ENCODE measurements at regions of chr2 and their contacts with region 1.

Region 1: DNA sequence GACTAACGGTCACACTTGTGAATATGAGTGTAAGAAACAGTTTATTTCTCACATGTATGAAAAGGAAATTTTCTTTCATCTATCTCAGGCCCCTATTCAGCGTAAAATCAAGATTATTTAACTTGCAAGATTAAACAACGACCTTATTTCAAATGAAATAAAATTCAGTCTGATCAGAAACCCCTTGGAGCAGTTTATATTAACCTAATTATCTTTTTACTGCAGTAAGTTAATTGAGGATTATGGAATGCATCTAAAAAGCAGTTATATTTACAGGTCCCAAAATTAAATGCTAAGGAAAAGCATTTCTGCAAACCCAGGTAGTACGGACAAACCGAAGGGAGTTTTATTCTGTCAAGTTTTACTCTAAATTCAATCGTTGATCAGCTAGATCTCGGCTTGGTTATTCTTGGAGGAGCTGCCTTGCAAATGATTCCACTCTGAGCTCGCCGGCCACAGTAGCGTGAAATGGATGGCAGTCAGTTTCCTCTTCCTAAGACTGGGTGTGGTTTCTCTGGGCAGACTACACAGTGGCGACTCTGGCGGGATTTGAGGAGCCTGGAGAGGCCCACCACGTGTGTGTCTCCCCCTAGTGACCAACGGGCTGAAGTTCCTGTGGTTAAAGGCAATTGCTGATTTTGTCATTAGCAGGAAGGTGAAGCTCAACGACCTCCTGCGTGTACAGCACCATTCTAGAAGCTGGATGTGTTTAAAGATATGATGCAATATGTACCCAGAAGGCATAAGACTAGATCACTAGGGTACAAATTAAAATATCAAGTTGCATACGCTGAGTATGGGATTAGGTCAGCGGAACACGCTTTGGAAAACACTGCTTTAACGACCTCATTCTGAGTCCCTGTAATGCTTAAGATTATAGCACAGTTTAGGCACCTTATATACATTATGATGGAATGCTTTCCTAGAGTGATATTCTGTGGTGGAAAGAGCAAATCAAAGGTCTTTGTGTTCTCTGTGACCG is 36.4 kb downstream of the PRKRA start:
- DNase-seq: peak; percentile 94
- H3K4me3 ChIP-seq: peak overlapping the region; percentile 49 to 91 (median 69)
- H3K27ac ChIP-seq: peak overlapping the region; percentile 91
- H3K4me1 ChIP-seq: peaks cover 13% of the 10 kb centered on the region
- H3K27me3 ChIP-seq: no peaks in the 10 kb centered on the region
- CTCF ChIP-seq: peak; percentile 90 to 94
- POLR2A ChIP-seq: peak; percentile 86

Region 2: DNA sequence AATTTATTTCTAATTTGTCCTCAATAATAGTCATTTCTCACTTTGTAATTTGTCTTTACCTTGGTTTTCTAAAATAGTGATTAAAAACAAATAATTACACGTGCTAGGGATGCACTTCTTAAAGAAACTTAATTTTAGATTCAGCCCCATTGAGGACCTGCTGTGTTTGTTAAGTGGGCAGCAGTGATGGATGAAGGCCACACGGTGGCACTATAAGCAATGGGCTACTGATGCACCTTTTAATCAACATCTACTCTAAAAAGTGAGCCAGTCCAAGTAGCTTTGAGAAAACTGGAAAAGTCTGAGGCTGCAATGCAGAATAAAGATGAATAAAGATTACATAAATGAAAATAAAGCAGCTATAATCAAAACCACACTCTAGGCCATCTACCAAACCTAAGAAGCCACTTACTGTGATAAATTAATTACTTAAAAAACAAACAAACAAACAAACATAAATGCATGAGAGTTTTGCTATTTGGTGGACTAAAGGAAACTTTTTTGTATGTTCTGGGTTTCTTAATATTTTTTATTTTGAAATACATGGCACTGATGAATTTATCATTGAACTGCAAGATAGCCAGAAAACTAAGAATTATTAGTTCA is 431.3 kb before region 1 on chr2:
- CTCF ChIA-PET with region 1: interaction called, 17 read pairs
- POLR2A ChIA-PET with region 1: no interaction called
- dilution Hi-C with region 1: no loop called
- intact Hi-C with region 1: loop called (anchors 5 kb)
- DNase-seq: peak; percentile 53
- H3K4me3 ChIP-seq: no peak overlapping the region
- H3K27ac ChIP-seq: no peak overlapping the region
- H3K4me1 ChIP-seq: no peaks in the 10 kb centered on the region
- H3K27me3 ChIP-seq: peaks cover 2 to 3% of the 10 kb centered on the region in 2 experiments
- CTCF ChIP-seq: peak; percentile 72 to 84
- POLR2A ChIP-seq: no peak

Region 3: DNA sequence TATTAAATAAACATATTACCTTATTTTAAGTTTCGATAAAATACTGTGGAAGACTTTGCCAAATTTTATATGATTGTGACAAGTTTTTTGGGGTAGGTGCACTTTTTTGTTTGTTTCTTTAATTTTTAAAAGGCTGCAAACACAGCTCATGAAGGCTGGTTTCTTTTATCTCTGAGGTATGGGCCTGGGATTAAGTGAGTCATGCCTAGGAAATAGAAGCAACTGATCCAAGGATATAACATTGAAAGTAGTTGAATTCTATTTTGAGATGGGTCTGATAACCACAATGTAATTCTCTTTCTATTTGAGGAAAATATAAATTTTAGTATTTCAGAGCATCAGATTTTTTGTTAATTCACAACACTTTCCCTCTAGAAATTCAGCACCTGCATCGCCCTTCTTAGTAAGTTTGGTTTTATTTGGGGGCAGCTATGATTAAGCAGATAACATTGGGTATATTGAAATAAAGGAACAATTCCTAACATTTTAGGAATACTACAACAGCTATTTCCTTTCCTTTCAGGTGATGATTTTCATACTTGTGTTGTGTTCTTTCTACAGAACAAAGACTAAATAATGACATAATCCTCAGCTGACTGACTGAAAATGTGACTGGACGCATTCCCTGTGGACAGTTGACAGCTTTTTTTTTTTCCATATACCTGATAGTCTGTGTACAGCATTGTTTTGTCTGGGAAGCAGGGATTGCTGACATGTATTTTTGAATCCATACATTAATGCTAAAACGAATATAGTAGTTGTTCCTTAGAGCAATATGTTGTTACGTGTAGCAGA is 285.5 kb before region 1 on chr2:
- CTCF ChIA-PET with region 1: interaction called, 122 read pairs
- POLR2A ChIA-PET with region 1: no interaction called
- dilution Hi-C with region 1: no loop called
- intact Hi-C with region 1: loop called (anchors 1 kb)
- DNase-seq: no peak
- H3K4me3 ChIP-seq: no peak overlapping the region
- H3K27ac ChIP-seq: no peak overlapping the region
- H3K4me1 ChIP-seq: no peaks in the 10 kb centered on the region
- H3K27me3 ChIP-seq: no peaks in the 10 kb centered on the region
- CTCF ChIP-seq: no peak
- POLR2A ChIP-seq: no peak

Region 4: DNA sequence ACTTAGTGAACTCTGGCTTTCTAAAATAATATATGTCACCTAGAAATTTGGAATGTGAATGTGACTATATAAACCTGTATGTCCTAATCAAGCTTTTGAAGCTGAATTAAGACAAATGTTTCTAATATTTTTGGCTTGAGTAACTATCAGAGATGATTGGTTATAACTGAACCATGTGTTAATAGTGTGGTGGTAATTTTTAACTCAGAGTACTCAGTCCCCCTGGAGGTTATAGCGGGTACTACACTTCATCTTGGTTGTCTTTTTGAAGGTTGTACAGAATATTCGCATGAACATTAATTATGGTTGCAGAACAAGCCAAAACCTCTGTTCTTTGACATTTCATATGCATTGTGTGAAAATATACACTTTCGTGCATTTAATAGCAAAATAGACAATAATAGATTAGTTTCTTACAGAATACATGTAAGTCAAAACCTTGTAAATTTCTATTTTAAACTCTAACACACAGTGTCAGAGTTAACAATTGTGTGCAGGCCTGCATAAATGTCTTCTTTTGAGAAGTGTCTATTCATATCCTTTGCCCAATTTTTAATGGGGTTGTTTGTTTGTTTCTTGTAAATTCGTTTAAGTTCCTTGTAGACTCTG is 134.2 kb before region 1 on chr2:
- CTCF ChIA-PET with region 1: interaction called, 10 read pairs
- POLR2A ChIA-PET with region 1: no interaction called
- dilution Hi-C with region 1: no loop called
- intact Hi-C with region 1: no loop called
- DNase-seq: peak; percentile 71
- H3K4me3 ChIP-seq: no peak overlapping the region
- H3K27ac ChIP-seq: no peak overlapping the region
- H3K4me1 ChIP-seq: peaks cover 22% of the 10 kb centered on the region
- H3K27me3 ChIP-seq: peaks cover 0 to 4% of the 10 kb centered on the region in 2 experiments
- CTCF ChIP-seq: peak; percentile 48 to 49
- POLR2A ChIP-seq: no peak

Region 5: GRCh38 chr2:178397002-178397605 is 17.5 kb before region 1 on chr2:
- CTCF ChIA-PET with region 1: interaction called, 74 read pairs
- POLR2A ChIA-PET with region 1: interaction called, 4 read pairs
- dilution Hi-C with region 1: no loop called
- intact Hi-C with region 1: loop called (anchors 1 kb)
- DNase-seq: peak; percentile 59
- H3K4me3 ChIP-seq: no peak overlapping the region
- H3K27ac ChIP-seq: no peak overlapping the region
- H3K4me1 ChIP-seq: no peaks in the 10 kb centered on the region
- H3K27me3 ChIP-seq: no peaks in the 10 kb centered on the region
- CTCF ChIP-seq: peak; percentile 43 to 51
- POLR2A ChIP-seq: no peak

Region 6: DNA sequence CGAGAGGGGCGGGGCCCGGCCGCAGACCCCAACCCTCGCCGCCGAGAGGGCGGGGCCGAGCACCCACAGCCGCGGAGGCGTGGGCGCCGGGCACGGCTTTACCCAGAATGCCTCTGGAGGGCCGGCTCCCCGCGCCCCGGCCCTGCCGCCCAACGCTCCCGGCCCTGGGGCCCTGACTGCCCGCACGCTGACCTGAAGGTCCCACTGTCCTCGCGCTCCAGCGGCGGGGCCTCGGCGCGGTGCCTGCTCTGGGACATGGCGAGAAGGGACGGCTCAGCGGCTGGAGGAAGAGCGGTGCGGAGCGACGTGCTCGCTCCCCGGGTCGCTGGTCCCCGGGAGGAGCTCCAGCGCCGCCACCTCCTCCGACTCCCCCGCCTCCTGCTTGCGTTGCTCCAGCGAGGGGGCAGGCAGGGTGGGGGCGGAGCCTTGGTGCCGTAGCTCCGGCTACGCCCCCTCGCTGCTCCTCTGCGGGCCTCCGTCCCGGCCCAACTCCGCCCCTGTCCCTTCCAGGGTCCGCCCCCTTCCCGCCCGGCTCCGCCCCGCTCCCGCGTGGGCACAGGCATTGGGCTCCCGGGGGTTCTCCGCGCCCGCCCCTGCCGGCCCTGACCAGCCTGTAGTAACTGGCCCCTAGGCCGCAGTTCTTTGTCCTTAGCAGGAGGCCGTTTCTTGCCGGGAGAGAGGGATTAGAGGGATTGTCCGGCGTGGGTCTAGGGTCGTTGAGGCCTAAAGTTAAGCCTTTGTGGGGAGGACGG is 36.4 kb after region 1 on chr2 and contains the starts of genes PJVK and PRKRA:
- CTCF ChIA-PET with region 1: interaction called, 22 read pairs
- POLR2A ChIA-PET with region 1: interaction called, 15 read pairs
- dilution Hi-C with region 1: no loop called
- intact Hi-C with region 1: loop called (anchors 1 kb)
- DNase-seq: peak; percentile 99
- H3K4me3 ChIP-seq: peak within 1 kb of the TSS; percentile 65 to 94 (median 75)
- H3K27ac ChIP-seq: peak within 1 kb of the TSS; percentile 94
- H3K4me1 ChIP-seq: peaks cover 15% of the 10 kb centered on the region
- H3K27me3 ChIP-seq: no peaks in the 10 kb centered on the region
- CTCF ChIP-seq: no peak
- POLR2A ChIP-seq: peak; percentile 96
- total RNA-seq, gene PJVK: 1.4 and 1.8 TPM in 2 replicates
- total RNA-seq, gene PRKRA: 42.4 and 46.6 TPM in 2 replicates

Region 7: DNA sequence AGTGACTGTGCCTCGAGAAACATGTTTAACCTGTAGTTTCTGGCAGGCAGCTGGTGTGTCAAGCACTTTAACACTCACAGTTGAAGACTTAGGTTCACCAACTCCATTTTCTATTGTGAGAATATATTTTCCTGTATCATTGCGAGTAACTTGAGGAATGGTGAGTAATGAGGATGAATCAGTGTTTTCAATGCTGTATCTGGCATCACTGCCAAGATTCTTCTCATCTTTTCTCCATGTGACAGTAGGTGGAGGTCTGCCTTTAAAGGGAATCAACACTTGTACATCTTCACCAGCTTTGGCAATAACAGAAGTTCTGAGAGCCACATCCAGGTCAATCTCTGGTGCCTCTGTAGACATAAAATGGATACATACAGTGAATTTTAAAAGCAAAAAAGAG is 138.5 kb after region 1 on chr2:
- CTCF ChIA-PET with region 1: no interaction called
- POLR2A ChIA-PET with region 1: no interaction called
- dilution Hi-C with region 1: no loop called
- intact Hi-C with region 1: no loop called
- DNase-seq: peak; percentile 16
- H3K4me3 ChIP-seq: no peak overlapping the region
- H3K27ac ChIP-seq: no peak overlapping the region
- H3K4me1 ChIP-seq: no peaks in the 10 kb centered on the region
- H3K27me3 ChIP-seq: no peaks in the 10 kb centered on the region
- CTCF ChIP-seq: no peak
- POLR2A ChIP-seq: no peak